ENCODE measurements at regions of chr2 and their contacts with region 1.

Region 1: DNA sequence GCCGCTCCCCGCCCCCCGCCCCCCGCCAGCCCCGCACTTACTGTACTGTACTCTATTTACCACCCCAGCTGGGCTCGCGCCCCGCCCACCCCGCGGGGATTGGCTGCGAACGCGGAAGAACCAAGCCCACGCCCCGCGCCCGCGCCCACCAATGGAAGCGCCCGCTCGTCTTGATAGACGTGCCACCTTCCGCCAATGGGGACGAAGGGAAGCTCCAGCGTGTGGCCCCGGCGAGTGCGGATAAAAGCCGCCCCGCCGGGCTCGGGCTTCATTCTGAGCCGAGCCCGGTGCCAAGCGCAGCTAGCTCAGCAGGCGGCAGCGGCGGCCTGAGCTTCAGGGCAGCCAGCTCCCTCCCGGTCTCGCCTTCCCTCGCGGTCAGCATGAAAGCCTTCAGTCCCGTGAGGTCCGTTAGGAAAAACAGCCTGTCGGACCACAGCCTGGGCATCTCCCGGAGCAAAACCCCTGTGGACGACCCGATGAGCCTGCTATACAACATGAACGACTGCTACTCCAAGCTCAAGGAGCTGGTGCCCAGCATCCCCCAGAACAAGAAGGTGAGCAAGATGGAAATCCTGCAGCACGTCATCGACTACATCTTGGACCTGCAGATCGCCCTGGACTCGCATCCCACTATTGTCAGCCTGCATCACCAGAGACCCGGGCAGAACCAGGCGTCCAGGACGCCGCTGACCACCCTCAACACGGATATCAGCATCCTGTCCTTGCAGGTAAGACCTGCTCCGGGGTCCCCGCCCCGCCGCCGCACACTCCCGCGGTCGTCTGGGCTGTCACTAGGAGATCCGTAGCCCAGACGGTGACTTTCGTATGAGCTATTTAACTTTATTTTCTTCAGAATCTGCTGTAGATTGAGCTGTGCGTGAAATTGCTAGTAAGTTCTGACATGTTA is at the start of gene ID2:
- DNase-seq: peak; percentile 100
- ATAC-seq: peak; percentile 87
- total RNA-seq, gene ID2: 31.3 TPM

Region 2: GRCh38 chr2:7427293-7428060 is 1254.6 kb before region 1 on chr2:
- intact Hi-C with region 1: loop called (anchors 2 kb)
- DNase-seq: no peak
- ATAC-seq: no peak

Region 3: GRCh38 chr2:8132351-8132831 is 549.6 kb before region 1 on chr2:
- intact Hi-C with region 1: loop called (anchors 5 kb)
- DNase-seq: no peak
- ATAC-seq: peak; percentile 16

Region 4: DNA sequence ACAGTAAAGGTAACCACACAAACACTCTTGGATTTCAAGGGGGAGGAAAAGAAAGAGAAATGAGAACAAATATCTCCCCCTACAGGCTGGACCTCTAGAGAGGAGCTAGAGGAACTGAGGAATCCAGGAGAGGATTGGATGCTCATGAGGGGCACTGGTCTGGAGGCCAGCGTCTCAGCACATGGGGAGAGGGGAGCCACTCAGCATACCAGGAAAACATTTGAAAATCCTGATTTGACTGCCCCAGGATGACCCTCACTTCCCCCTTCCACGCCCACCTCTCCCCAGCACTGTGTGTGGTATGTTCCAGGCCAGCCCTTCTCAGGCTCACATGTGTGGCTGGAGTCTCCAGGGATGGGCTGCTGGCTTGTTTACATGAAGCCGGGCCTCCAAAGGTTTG is 397.0 kb before region 1 on chr2:
- intact Hi-C with region 1: loop called (anchors 10 kb)
- DNase-seq: no peak
- ATAC-seq: peak; percentile 49

Region 5: DNA sequence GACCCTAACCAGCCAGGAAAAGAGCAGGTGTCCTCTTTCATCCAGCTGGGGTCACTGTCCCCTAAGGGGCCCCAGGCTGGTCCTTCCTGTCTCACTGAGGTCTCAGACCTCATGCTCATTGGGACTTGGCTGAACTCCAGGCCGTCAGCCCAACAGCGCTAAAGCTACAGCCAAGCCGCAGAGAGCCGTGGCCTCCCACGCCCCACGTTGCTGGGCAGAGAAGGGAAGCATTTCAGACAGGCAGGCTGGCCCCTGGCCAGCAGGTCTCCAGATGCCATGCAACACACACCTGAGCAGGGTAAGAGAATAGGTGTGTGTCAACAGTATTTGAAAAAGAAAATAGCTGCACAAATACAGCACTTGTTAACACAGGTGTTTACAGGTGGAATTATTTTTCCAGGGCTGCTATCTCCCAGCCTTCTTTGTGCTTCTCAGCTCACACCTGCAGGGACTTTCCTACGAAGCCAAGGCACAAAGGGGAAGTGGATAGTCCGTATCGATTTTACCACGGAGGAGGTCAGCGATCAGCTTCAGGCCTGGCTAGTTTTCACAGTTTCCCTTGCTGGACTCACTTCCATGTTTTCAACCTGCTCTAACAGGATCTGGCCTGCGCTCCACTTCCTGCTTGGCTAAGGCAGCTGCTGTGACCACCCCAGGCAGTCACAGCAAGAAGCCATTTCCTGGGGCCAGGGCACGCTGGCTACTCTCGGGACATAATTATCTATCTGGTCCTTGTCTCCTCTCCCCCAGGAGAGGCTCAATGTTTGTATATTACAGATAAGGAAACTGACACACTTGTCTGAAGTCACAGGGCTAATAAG is 156.2 kb before region 1 on chr2:
- intact Hi-C with region 1: loop called (anchors 2 kb)
- DNase-seq: peak; percentile 91
- ATAC-seq: peak; percentile 86

Region 6: DNA sequence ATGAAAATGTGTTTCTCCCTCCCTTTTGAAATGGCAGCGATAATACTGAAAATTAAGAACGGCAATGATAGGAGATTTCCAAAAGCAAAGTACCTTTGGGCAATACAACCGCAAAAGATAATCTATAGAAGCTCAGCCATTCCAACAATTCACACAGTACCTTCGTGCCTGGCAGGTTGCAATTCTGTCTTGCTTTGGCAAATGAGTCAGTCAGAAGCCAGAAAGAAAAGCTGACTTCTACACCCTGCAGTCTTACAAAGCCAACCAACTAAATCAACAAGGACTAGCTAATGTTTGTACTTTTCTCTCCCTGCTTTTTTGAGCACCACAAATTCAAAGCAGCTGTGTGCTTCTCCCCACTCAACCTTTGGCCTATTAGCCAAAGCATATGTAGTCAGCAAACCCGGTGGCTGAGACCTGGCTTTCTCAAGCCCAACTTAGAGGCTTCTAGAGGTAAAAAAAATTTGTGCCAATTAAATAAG is 25.8 kb before region 1 on chr2:
- intact Hi-C with region 1: no loop called
- DNase-seq: no peak
- ATAC-seq: no peak